Activated CD4-positive, alpha-beta T cell treated with anti-CD3 and anti-CD28 coated beads for 36 hours (primary cell): ENCODE measurements at regions of chr1 and their contacts with region 1.

Region 1: GRCh38 chr1:247390116-247390791 is 25.7 kb upstream of the NLRP3 start:
- DNase-seq: peak; percentile 90
- ATAC-seq: peak; percentile 99
- H3K4me3 Mint-ChIP-seq: peak overlapping the region; percentile 50
- H3K27ac Mint-ChIP-seq: peak overlapping the region; percentile 64
- H3K4me1 Mint-ChIP-seq: peaks cover 24% of the 10 kb centered on the region
- H3K27me3 Mint-ChIP-seq: peaks cover 14% of the 10 kb centered on the region

Region 2: DNA sequence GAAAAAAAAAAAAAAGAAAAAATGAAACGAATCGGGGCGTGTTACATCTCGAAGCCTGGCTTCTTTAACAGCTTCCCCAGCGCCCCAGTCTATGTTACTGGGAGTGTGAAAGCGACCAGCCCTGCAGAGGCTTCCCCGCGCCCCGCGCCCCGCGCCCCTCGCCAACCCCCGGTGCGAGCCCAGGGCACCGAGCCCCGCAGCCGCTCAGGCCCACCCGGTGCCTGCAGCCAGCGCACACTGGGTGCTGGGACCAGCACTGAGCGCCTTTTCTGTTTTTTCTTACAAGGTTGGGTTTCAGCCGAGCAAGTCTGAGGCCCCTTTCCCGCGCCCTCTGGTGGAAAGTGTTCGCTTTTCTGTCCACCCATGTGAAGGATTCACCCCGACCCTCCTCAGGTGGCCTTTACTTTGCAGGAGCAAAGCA is 16.5 kb before region 1 on chr1:
- CTCF ChIA-PET with region 1: interaction called, 23 read pairs
- POLR2A ChIA-PET with region 1: interaction called, 4 read pairs
- intact Hi-C with region 1: no loop called
- DNase-seq: peak; percentile 82
- ATAC-seq: peak; percentile 78
- H3K4me3 Mint-ChIP-seq: peak overlapping the region; percentile 20
- H3K27ac Mint-ChIP-seq: no peak overlapping the region
- H3K4me1 Mint-ChIP-seq: peaks cover 2% of the 10 kb centered on the region
- H3K27me3 Mint-ChIP-seq: peaks cover 11% of the 10 kb centered on the region

Region 3: DNA sequence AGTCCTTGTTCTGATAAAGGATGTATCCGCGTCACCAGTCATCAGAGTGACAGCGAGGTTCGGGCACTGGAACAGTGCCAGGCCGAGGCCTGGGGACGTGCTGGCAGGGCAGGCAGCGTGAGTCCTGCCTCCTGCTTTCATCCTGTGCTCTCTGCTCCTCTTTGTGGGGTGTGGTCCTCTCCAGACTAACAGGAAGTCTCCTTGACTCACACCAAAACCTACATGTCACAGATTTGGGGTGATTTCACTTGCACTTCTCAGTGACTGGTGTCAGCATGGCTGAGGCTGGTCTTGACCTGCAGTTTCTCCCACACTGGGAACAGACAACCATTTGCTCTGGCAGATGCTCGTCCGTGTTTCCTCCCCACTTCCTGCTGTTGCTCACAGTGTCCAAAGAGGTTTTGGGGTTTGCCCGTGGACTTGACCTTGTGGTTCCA is 16.9 kb after region 1 on chr1:
- CTCF ChIA-PET with region 1: interaction called, 17 read pairs
- POLR2A ChIA-PET with region 1: no interaction called
- intact Hi-C with region 1: loop called (anchors 1 kb)
- DNase-seq: peak; percentile 84
- ATAC-seq: peak; percentile 85
- H3K4me3 Mint-ChIP-seq: peak overlapping the region; percentile 24
- H3K27ac Mint-ChIP-seq: peak overlapping the region; percentile 72
- H3K4me1 Mint-ChIP-seq: peaks cover 41% of the 10 kb centered on the region
- H3K27me3 Mint-ChIP-seq: peaks cover 2% of the 10 kb centered on the region

Region 4: DNA sequence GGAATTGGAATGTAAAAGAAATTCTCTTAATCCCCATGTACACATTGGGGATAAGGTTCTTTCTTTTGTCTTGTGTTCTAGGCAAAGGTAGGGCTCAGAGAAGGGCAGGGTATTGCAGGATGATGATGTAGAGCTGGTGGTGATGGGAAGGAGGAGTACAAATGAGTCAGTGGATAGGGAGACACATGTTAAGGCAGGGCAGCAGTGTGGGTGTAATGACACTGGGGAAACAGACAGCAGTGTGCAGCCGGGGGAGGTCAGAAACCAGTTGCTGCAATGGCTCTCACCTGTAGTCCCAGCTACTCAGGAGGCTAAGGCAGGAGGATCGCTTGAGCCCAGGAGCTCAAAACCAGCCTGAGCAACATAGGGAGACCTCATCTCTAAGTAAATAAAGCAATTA is 30.8 kb after region 1 on chr1:
- CTCF ChIA-PET with region 1: interaction called, 12 read pairs
- POLR2A ChIA-PET with region 1: no interaction called
- intact Hi-C with region 1: loop called in 1 of 2 experiments (anchors 1 kb)
- DNase-seq: peak; percentile 72
- ATAC-seq: peak; percentile 98
- H3K4me3 Mint-ChIP-seq: no peak overlapping the region
- H3K27ac Mint-ChIP-seq: no peak overlapping the region
- H3K4me1 Mint-ChIP-seq: peaks cover 37% of the 10 kb centered on the region
- H3K27me3 Mint-ChIP-seq: peaks cover 2% of the 10 kb centered on the region

Region 5: DNA sequence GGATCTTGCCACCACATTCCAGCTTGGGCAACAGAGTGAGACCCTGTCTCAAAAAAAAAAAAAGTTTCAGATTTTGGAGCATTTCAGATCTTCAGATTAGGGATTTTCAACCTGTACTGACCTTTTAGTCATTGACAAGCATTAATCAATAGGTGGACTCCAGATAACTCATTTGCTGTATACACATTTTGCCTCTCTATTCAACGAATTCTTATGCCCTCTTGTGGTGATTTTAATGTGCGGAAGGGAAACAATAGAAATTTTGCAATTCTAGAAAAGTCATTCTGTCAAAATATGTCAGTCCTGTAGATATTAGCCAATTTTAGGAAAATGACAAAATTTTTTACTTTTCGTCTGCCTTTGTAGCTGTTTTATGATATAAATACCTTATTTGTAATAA is 186.2 kb after region 1 on chr1:
- CTCF ChIA-PET with region 1: interaction called, 3 read pairs
- POLR2A ChIA-PET with region 1: no interaction called
- intact Hi-C with region 1: loop called (anchors 1 kb)
- DNase-seq: no peak
- ATAC-seq: peak; percentile 39
- H3K4me3 Mint-ChIP-seq: no peak overlapping the region
- H3K27ac Mint-ChIP-seq: no peak overlapping the region
- H3K4me1 Mint-ChIP-seq: no peaks in the 10 kb centered on the region
- H3K27me3 Mint-ChIP-seq: peaks cover 2% of the 10 kb centered on the region